ENCODE measurements at regions of chr2 and their contacts with region 1.

Region 1: GRCh38 chr2:186460465-186460864 is 25.6 kb upstream of the ZC3H15 start:
- DNase-seq: peak; percentile 9
- H3K4me3 Mint-ChIP-seq: no peak overlapping the region
- H3K27ac Mint-ChIP-seq: no peak overlapping the region
- H3K4me1 Mint-ChIP-seq: peaks cover 9% of the 10 kb centered on the region
- H3K27me3 Mint-ChIP-seq: no peaks in the 10 kb centered on the region
- CTCF ChIP-seq: peak; percentile 22

Region 2: GRCh38 chr2:185291035-185291647 is 1169.3 kb before region 1 on chr2:
- CTCF ChIA-PET with region 1: no interaction called
- intact Hi-C with region 1: loop called (anchors 10 kb)
- DNase-seq: peak; percentile 67
- H3K4me3 Mint-ChIP-seq: no peak overlapping the region
- H3K27ac Mint-ChIP-seq: no peak overlapping the region
- H3K4me1 Mint-ChIP-seq: no peaks in the 10 kb centered on the region
- H3K27me3 Mint-ChIP-seq: no peaks in the 10 kb centered on the region
- CTCF ChIP-seq: peak; percentile 78

Region 3: DNA sequence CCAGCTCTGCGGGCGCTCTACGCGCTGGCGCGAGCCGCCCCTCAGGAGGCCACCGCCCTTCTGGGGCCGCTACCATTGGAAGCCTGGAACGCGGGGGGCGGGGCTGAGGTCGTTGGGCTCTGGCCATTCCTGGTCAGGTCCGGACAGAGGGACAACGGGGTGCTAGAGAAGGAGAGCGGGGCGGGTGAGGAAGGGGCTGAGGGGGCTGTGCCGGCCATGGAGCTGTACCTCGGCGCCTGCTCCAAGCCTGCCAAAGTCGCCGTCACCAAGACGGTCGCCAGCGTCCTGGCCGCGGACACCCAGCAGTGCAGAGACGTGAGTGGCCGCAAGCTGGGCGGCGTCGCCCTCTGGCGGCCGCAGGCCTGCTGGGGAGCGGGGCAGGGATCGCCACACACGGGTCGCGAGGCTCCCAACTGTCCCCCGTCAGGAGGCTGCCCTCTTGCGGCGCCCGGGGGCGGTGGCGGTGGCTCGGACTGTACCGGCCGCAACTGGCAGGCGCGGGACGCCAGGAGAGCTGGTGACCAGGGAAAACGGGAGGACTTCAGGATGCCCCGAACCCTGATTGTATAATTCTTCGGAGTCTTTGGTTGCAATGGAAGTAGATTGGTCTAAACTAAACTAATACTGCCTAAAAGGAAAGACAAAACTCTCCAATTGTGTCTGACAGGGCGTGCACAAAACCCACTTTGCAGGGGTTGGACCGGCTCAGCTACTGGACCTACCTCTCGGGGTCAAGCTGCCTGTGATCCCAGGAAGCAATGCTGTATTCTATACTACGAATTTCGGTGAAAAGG is 721.6 kb before region 1 on chr2 and contains the start of gene FSIP2:
- CTCF ChIA-PET with region 1: no interaction called
- intact Hi-C with region 1: loop called (anchors 2 kb)
- DNase-seq: peak; percentile 98
- H3K4me3 Mint-ChIP-seq: peak within 1 kb of the TSS; percentile 81
- H3K27ac Mint-ChIP-seq: peak within 1 kb of the TSS; percentile 53
- H3K4me1 Mint-ChIP-seq: peaks cover 18% of the 10 kb centered on the region
- H3K27me3 Mint-ChIP-seq: no peaks in the 10 kb centered on the region
- CTCF ChIP-seq: peak; percentile 99
- total RNA-seq, gene FSIP2: 0.27 and 0.35 TPM in 2 replicates

Region 4: GRCh38 chr2:185979546-185980071 is 480.9 kb before region 1 on chr2:
- CTCF ChIA-PET with region 1: no interaction called
- intact Hi-C with region 1: loop called (anchors 2 kb)
- DNase-seq: peak; percentile 35
- H3K4me3 Mint-ChIP-seq: no peak overlapping the region
- H3K27ac Mint-ChIP-seq: no peak overlapping the region
- H3K4me1 Mint-ChIP-seq: peaks cover 7% of the 10 kb centered on the region
- H3K27me3 Mint-ChIP-seq: no peaks in the 10 kb centered on the region
- CTCF ChIP-seq: no peak

Region 5: DNA sequence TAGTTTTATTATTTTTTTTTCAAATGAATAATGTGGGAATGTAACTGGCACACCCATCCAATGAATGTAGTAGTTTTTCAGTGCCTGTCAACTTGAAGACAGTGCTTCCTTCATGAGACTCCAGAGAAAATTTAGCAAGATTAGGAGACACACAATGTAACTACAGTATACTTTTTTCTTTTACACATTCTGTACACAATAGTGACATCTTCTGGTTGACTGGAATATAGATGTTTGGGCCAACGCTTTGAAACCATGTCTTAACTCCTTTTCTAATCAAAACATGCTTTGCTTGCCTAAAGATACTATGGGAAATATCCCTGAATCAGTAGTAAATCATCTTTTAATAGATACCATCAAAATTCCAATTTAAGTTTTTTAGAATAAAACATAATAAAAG is 203.9 kb before region 1 on chr2:
- CTCF ChIA-PET with region 1: no interaction called
- intact Hi-C with region 1: loop called (anchors 1 kb)
- DNase-seq: peak; percentile 2
- H3K4me3 Mint-ChIP-seq: no peak overlapping the region
- H3K27ac Mint-ChIP-seq: no peak overlapping the region
- H3K4me1 Mint-ChIP-seq: no peaks in the 10 kb centered on the region
- H3K27me3 Mint-ChIP-seq: no peaks in the 10 kb centered on the region
- CTCF ChIP-seq: peak; percentile 51